ENCODE measurements at regions of chr2 and their contacts with region 1.

Region 1: DNA sequence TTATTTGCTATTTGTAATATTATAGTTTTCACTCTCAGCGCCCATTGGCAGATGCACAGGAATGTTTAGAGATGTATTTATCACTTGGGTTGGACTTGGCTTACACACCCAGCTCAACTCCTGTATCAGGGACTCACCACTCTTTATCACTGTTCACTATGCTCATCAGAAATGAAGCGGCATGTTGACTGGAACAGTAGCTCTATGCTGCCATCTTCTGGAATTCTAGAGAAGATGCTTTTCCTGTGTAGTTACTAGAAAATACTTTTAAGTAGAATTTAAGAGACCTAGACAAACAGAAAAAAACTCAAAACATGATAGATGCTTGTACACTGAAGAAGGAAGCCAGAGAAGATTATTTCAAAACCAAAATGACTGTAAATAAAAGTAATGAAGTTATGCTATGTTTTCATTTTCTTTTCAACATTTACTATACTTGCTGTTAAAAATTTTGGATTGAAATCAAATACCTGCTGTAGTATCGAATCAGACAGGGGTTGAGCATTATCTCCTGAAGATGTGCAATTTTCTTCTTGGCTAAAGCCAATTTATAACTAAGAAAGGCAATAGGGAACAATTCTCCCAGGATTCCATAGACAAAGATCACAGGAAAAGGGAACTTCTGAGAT is 47.4 kb upstream of the NXPH2 start:
- DNase-seq: no peak
- H3K4me3 Mint-ChIP-seq: no peak overlapping the region
- H3K27ac Mint-ChIP-seq: no peak overlapping the region
- H3K4me1 Mint-ChIP-seq: no peaks in the 10 kb centered on the region
- H3K27me3 Mint-ChIP-seq: no peaks in the 10 kb centered on the region

Region 2: GRCh38 chr2:137865954-137866540 is 961.5 kb before region 1 on chr2:
- intact Hi-C with region 1: loop called (anchors 1 kb)
- DNase-seq: no peak
- H3K4me3 Mint-ChIP-seq: no peak overlapping the region
- H3K27ac Mint-ChIP-seq: no peak overlapping the region
- H3K4me1 Mint-ChIP-seq: no peaks in the 10 kb centered on the region
- H3K27me3 Mint-ChIP-seq: no peaks in the 10 kb centered on the region

Region 3: DNA sequence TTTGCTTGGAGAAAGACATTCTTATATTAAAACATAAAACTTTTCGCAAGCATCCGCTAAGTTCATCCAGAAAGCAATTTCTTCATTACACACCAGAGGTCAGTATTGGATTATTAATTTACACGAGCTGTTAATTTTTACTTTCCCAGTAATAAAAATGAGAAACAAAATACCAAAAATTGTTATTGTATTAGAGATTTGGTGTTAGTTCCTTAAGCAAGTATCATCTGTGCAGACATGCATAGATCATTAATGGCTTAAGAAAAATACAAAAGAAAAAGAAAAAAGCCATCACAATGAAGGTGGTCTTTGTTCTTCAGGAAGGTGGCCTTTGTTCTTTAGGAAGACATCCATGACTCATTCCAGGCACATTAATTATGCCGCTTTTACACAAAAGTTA is 916.9 kb before region 1 on chr2:
- intact Hi-C with region 1: loop called (anchors 5 kb)
- DNase-seq: no peak
- H3K4me3 Mint-ChIP-seq: no peak overlapping the region
- H3K27ac Mint-ChIP-seq: no peak overlapping the region
- H3K4me1 Mint-ChIP-seq: no peaks in the 10 kb centered on the region
- H3K27me3 Mint-ChIP-seq: no peaks in the 10 kb centered on the region

Region 4: DNA sequence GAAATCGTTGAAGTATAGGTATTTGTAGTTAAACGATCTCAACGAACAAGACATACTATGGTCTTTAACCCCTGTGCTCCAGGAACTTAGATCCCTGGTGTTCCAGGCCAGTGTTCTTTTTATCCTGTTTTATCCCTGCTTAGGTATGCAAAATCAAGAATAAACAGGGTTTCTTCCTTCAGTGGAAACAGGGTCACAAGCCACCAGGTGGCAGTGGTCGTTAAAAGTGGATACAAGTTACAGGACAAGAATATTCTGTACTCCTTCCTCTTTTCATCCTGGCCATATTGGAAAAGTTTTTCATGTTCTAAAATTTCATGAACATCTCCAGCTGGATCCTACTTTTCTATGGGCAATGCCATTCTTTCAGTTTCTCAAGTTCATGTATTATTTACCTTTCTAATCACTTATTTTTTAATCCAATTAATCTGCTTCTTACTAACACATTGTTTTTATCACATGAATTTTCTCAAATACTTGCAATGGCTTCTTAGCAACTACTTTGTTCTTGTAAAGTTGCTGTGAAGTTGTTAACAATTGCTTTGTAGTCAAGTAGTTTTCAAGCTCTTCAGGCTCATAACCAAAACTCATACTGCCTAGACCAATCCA is 879.7 kb before region 1 on chr2:
- intact Hi-C with region 1: loop called (anchors 5 kb)
- DNase-seq: no peak
- H3K4me3 Mint-ChIP-seq: no peak overlapping the region
- H3K27ac Mint-ChIP-seq: no peak overlapping the region
- H3K4me1 Mint-ChIP-seq: peaks cover 5% of the 10 kb centered on the region
- H3K27me3 Mint-ChIP-seq: no peaks in the 10 kb centered on the region

Measured in activated T-helper 2 cell treated with anti-CD3 and anti-CD28 coated beads, Interferon-gamma antibody, Interleukin-2, Interleukin-4, amounts not matched to agents 10 μg/mL and 5 μg/mL and 100 μg/mL, durations not matched to agents 14 hours and 24 hours and 36 hours (primary cell).